CD4-positive, alpha-beta memory T cell (primary cell): ENCODE measurements at regions of chr2 and their contacts with region 1.

Region 1: GRCh38 chr2:216350214-216350789 is 22.0 kb downstream of the MARCHF4 start:
- DNase-seq: peak; percentile 19 to 57 (median 27)
- H3K4me3 ChIP-seq: no peak overlapping the region
- H3K4me3 Mint-ChIP-seq: peak overlapping the region in 7 of 8 donors; percentile 7 to 82 (median 37)
- H3K27ac ChIP-seq: no peak overlapping the region
- H3K27ac Mint-ChIP-seq: peak overlapping the region; percentile 25 to 88 (median 72)
- H3K4me1 ChIP-seq: peaks cover 79% of the 10 kb centered on the region
- H3K4me1 Mint-ChIP-seq: peaks cover 67 to 80% (median 73%) of the 10 kb centered on the region in 4 donors
- H3K27me3 ChIP-seq: no peaks in the 10 kb centered on the region
- H3K27me3 Mint-ChIP-seq: no peaks in the 10 kb centered on the region

Region 2: GRCh38 chr2:216210701-216211540 is 139.4 kb before region 1 on chr2:
- CTCF ChIA-PET with region 1: no interaction called
- POLR2A ChIA-PET with region 1: no interaction called
- intact Hi-C with region 1: no loop called
- DNase-seq: no peak
- H3K4me3 ChIP-seq: no peak overlapping the region
- H3K4me3 Mint-ChIP-seq: no peak overlapping the region
- H3K27ac ChIP-seq: no peak overlapping the region
- H3K27ac Mint-ChIP-seq: peak overlapping the region; percentile 5 to 91 (median 43)
- H3K4me1 ChIP-seq: no peaks in the 10 kb centered on the region
- H3K4me1 Mint-ChIP-seq: peaks cover 10 to 23% (median 17%) of the 10 kb centered on the region in 4 donors
- H3K27me3 ChIP-seq: no peaks in the 10 kb centered on the region
- H3K27me3 Mint-ChIP-seq: no peaks in the 10 kb centered on the region

Region 3: DNA sequence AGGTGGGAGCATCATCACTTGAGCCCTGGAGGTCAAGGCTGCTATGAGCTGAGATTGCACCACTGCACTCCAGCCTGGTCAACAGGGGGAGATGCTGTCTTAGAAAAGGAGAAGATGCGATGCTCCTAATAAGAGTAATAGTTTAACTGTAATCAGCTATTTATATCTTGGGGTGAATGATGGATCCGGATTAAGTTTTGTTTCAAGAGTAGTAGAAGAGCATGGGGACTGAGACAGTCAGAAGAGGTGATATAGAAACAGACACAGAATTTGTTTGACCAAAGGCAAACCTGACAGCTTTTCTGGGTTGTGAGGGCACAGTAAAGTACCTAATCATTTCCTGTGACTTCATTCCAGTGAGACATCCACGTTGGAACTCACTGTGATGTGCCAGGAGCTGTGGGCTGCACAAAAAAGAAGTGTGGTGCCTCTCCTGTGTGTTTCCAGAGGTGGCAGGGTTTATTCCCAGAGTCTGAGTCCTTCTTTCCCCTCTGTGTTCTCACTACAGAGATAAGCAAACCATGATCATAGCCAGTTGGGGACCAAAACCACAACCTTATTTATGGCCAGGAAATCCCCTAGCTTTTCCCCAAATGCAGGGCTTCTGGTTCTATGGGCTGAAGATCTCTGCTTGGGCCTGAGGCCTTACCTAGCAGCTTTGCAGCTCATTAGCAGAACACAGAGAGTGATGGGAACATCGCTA is 127.5 kb before region 1 on chr2:
- CTCF ChIA-PET with region 1: interaction called, 12 read pairs
- POLR2A ChIA-PET with region 1: interaction called, 3 read pairs
- intact Hi-C with region 1: no loop called
- DNase-seq: peak in 2 of 5 donors; percentile 5 to 10
- H3K4me3 ChIP-seq: no peak overlapping the region
- H3K4me3 Mint-ChIP-seq: no peak overlapping the region
- H3K27ac ChIP-seq: no peak overlapping the region
- H3K27ac Mint-ChIP-seq: peak overlapping the region in 4 of 7 donors; percentile 0 to 20 (median 1)
- H3K4me1 ChIP-seq: peaks cover 13% of the 10 kb centered on the region
- H3K4me1 Mint-ChIP-seq: peaks cover 10 to 18% (median 15%) of the 10 kb centered on the region in 4 donors
- H3K27me3 ChIP-seq: no peaks in the 10 kb centered on the region
- H3K27me3 Mint-ChIP-seq: no peaks in the 10 kb centered on the region

Region 4: DNA sequence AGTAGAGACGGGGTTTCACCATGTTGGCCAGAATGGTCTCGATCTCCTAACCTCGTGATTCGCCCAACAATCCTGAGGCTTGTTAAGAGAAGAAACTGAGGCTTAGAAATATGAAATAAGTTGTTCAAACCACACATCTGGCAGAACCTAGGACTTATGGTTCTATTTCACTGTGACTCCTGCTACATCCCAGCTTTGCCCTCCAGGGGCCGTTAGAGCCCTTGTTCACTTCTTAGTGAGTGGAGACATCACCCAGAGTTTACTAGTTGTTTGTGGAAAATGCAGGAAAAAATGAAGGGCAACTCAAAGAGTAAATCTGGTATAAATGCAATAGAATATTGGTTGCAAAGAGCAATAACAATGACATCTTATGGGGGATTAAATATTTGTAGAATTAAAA is 22.0 kb before region 1 on chr2:
- CTCF ChIA-PET with region 1: interaction called, 18 read pairs
- POLR2A ChIA-PET with region 1: no interaction called
- intact Hi-C with region 1: no loop called
- DNase-seq: peak in 3 of 5 donors; percentile 15 to 20 (median 19)
- H3K4me3 ChIP-seq: no peak overlapping the region
- H3K4me3 Mint-ChIP-seq: no peak overlapping the region
- H3K27ac ChIP-seq: no peak overlapping the region
- H3K27ac Mint-ChIP-seq: no peak overlapping the region
- H3K4me1 ChIP-seq: no peaks in the 10 kb centered on the region
- H3K4me1 Mint-ChIP-seq: peaks cover 0 to 3% (median 0%) of the 10 kb centered on the region in 4 donors
- H3K27me3 ChIP-seq: no peaks in the 10 kb centered on the region
- H3K27me3 Mint-ChIP-seq: no peaks in the 10 kb centered on the region

Region 5: DNA sequence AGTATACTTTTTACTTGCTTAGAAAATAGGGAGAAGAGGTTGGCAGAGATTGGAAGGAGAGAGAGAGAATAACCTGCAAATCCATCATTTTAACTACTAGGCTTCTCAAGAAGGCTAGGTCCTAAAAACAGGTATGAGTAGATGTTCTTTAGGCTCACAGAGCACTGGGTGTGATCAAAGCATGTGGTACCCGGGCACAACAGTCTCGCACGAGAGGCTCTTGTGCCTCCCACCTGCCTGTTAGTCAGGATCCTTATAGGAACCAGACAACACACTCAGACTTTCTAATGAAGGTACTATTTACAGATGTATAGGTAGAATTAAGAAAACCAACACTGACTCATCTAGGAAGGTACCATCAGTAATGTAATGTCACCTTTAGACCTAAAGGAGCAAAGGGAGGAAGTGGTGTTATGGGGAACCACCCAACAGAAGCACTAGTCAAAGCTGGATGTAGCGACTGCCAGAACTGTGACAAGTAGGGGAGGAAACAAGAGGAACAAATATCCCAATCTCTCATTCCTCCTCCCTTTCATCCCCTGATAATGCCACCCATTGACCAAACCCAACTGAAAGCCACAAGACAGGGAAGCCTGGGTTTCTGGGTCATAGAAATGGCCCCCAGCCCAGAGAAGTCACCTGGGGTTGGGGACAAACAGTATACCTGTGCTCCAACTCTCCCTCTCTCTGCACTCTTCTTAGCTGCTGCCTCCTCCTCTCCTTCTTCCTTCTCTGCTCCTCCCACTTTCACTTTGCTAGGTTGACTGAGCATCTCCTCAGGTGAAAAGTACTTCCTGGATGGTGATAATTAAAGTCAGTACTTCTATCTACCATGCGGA is 38.0 kb after region 1 on chr2:
- CTCF ChIA-PET with region 1: no interaction called
- POLR2A ChIA-PET with region 1: interaction called, 3 read pairs
- intact Hi-C with region 1: loop called (anchors 5 kb)
- DNase-seq: peak in 3 of 5 donors; percentile 39 to 42 (median 41)
- H3K4me3 ChIP-seq: no peak overlapping the region
- H3K4me3 Mint-ChIP-seq: peak overlapping the region in 5 of 8 donors; percentile 33 to 72 (median 41)
- H3K27ac ChIP-seq: peak overlapping the region; percentile 25
- H3K27ac Mint-ChIP-seq: peak overlapping the region; percentile 33 to 91 (median 68)
- H3K4me1 ChIP-seq: peaks cover 13% of the 10 kb centered on the region
- H3K4me1 Mint-ChIP-seq: peaks cover 12 to 21% (median 14%) of the 10 kb centered on the region in 4 donors
- H3K27me3 ChIP-seq: no peaks in the 10 kb centered on the region
- H3K27me3 Mint-ChIP-seq: no peaks in the 10 kb centered on the region